Left ventricle myocardium inferior (tissue), 1 donor: ENCODE measurements at regions of chr16 and their contacts with region 1.

Region 1: DNA sequence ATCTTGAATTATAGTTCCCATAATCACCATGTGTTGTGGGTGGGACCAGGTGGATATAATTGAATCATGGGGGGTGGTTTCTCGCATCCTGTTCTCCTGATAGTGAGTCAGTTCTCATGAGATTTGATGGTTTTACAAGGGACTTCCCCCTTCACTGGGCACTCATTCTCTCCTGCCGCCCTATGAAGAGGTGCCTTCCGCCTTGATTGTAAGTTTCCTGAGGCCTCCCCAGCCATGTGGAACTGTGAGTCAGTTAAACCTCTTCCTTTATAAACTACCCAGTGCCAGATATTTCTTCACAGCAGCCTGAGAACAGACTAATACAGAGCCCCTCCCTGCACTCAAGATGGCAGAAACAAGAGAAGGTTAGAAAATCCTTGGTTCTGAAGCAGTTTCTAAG is 26.4 kb downstream of the LDAF1 start:
- DNase-seq: no peak
- H3K4me3 ChIP-seq: no peak overlapping the region
- H3K27ac ChIP-seq: no peak overlapping the region
- H3K4me1 ChIP-seq: no peaks in the 10 kb centered on the region
- H3K27me3 ChIP-seq: no peaks in the 10 kb centered on the region
- CTCF ChIP-seq: no peak

Region 2: GRCh38 chr16:19808061-19808621 is 1376.7 kb before region 1 on chr16:
- intact Hi-C with region 1: no loop called
- DNase-seq: no peak
- H3K4me3 ChIP-seq: no peak overlapping the region
- H3K27ac ChIP-seq: peak overlapping the region; percentile 83
- H3K4me1 ChIP-seq: peaks cover 68% of the 10 kb centered on the region
- H3K27me3 ChIP-seq: no peaks in the 10 kb centered on the region
- CTCF ChIP-seq: no peak

Region 3: DNA sequence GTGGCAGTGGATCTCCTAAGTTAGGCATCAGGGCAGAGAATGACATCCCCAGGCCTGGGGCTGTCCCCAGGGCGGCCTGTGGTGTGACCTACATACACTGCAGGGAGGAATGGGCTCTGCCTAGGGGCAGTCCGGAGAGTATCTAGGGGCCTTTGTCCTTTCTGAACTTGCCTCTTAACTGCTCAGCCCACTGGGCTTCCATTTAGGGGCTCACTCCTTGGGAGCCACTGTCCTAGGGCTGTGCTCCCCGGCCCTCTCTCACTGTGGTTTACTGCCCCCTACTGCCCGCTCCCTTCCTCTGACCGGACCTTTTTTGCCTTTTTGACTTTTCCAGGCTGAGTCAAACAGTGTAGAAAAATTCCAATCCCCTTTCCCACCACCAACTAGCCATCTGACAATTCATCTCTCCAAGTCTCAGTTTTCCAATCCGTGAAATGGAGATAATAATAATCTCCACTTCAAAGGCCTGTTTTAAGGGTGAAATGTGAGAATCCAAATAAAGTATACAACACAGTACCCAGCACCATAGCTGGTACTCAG is 101.0 kb before region 1 on chr16:
- intact Hi-C with region 1: no loop called
- DNase-seq: peak; percentile 64
- H3K4me3 ChIP-seq: no peak overlapping the region
- H3K27ac ChIP-seq: no peak overlapping the region
- H3K4me1 ChIP-seq: no peaks in the 10 kb centered on the region
- H3K27me3 ChIP-seq: no peaks in the 10 kb centered on the region
- CTCF ChIP-seq: peak; percentile 83

Region 4: GRCh38 chr16:21126518-21126917 is 58.3 kb before region 1 on chr16:
- intact Hi-C with region 1: no loop called
- DNase-seq: no peak
- H3K4me3 ChIP-seq: no peak overlapping the region
- H3K27ac ChIP-seq: no peak overlapping the region
- H3K4me1 ChIP-seq: no peaks in the 10 kb centered on the region
- H3K27me3 ChIP-seq: no peaks in the 10 kb centered on the region
- CTCF ChIP-seq: no peak

Region 5: GRCh38 chr16:21300309-21301167 is 115.7 kb after region 1 on chr16:
- intact Hi-C with region 1: loop called (anchors 10 kb)
- DNase-seq: peak; percentile 87
- H3K4me3 ChIP-seq: peak overlapping the region; percentile 79
- H3K27ac ChIP-seq: peak overlapping the region; percentile 85
- H3K4me1 ChIP-seq: peaks cover 23% of the 10 kb centered on the region
- H3K27me3 ChIP-seq: no peaks in the 10 kb centered on the region
- CTCF ChIP-seq: peak; percentile 88

Region 6: DNA sequence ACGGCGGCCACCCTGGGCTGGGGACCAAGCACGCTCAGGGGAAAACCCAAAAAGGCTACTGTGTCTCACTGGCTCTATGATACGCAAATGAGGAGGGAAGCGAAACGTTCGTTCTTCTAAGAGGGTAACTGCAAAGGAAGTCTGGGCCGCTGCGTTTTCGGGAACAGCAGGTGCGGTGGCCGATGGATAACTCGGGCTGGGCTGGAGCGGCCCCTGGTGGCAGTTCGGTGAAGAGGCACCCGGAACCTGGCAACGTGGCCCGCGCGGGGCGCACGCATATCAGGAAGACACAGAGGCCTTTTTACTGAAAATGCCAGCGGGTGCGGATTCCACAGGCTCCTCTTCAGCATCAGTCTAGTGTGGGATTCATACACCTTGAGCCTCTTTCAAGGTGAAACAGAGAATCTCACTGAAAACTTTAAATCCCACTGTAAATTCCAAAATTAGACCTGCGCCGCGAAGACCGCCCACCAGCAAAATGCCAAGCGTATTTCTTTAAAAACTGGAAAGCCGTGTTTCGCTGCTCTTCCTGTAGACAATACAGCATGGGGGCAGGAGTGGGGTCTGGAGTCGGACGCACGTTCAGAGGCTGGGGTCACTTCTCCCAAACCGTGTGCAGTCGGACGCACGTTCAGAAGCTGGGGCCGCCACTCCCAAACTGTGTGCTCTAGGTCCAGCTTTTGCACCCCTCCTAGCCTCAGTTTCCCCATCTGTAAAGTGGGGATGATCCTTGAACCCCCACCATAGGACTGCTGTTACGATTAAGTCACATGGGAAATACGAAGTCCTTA is 370.2 kb after region 1 on chr16:
- intact Hi-C with region 1: loop called (anchors 10 kb)
- DNase-seq: peak; percentile 90
- H3K4me3 ChIP-seq: peak overlapping the region; percentile 41
- H3K27ac ChIP-seq: no peak overlapping the region
- H3K4me1 ChIP-seq: peaks cover 26% of the 10 kb centered on the region
- H3K27me3 ChIP-seq: peaks cover 18% of the 10 kb centered on the region
- CTCF ChIP-seq: peak; percentile 100